ENCODE measurements at regions of chr3 and their contacts with region 1.

Region 1: GRCh38 chr3:50227390-50228183 is 8.4 kb upstream of the GNAI2 start:
- DNase-seq: peak; percentile 98
- ATAC-seq: peak; percentile 93
- H3K4me3 ChIP-seq: peak overlapping the region; percentile 77
- H3K27ac ChIP-seq: peak overlapping the region; percentile 84
- H3K4me1 ChIP-seq: peaks cover 20% of the 10 kb centered on the region
- H3K27me3 ChIP-seq: no peaks in the 10 kb centered on the region
- CTCF ChIP-seq: peak; percentile 88

Region 2: GRCh38 chr3:50272911-50273693 is 45.5 kb after region 1 on chr3:
- intact Hi-C with region 1: loop called (anchors 5 kb)
- DNase-seq: peak; percentile 94
- ATAC-seq: peak; percentile 84
- H3K4me3 ChIP-seq: peak overlapping the region; percentile 37
- H3K27ac ChIP-seq: no peak overlapping the region
- H3K4me1 ChIP-seq: peaks cover 30% of the 10 kb centered on the region
- H3K27me3 ChIP-seq: peaks cover 7% of the 10 kb centered on the region
- CTCF ChIP-seq: peak; percentile 98

Measured in upper lobe of right lung (tissue), 1 donor.